ENCODE measurements at regions of chr7 and their contacts with region 1.

Region 1: DNA sequence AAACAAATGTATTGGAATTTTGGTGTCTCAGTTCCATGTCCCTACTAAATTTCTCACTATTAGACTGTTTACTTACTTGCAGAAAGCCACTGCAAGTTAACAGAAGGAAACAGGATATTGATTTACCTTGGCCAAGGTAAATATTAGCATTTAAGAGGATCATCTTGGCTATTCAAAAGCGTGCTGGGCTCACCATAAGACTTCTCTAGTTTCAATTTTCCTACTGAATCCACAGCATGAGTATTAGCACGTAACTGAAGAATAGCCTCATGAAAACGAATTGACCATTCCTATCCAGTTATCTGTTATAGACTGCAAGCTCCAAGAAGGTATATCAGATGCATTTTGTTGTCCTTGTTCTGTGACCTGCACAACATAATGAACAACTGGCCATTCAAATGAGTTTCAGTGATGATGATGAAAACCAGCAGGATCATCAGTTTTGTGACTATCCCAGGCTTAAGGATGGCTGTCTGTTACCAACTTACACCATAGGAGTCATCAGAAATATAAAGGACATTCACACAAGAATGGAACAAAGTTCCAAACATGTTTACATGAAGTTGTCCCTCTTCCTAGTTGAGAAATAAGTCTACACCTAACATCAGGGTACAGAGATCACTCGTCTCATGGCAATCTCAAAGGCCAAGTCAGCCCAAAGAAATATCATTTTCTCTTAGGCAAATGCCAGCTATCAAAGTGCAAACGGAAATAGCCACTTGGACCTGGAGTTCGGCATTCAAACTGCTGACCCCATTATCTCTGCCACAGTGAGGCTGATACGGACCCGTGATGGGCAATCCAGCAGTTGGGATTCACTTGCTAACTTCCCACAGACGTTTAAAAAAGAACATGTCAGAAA is 53.2 kb downstream of the CREB3L2 start:
- DNase-seq: peak; percentile 90
- ATAC-seq: peak; percentile 79
- H3K4me3 ChIP-seq: peak overlapping the region; percentile 11 to 47 (median 32); a peak in 4 of 6 replicates
- H3K27ac ChIP-seq: peak overlapping the region; percentile 88
- H3K4me1 ChIP-seq: peaks cover 96% of the 10 kb centered on the region
- H3K27me3 ChIP-seq: no peaks in the 10 kb centered on the region
- CTCF ChIP-seq: no peak
- EP300 ChIP-seq: peak in 1 of 2 experiments; percentile 95; a peak in 2 of 4 replicates
- POLR2A ChIP-seq: peak; percentile 33 to 35; a peak in 1 of 4 replicates
- RAD21 ChIP-seq: no peak

Region 2: DNA sequence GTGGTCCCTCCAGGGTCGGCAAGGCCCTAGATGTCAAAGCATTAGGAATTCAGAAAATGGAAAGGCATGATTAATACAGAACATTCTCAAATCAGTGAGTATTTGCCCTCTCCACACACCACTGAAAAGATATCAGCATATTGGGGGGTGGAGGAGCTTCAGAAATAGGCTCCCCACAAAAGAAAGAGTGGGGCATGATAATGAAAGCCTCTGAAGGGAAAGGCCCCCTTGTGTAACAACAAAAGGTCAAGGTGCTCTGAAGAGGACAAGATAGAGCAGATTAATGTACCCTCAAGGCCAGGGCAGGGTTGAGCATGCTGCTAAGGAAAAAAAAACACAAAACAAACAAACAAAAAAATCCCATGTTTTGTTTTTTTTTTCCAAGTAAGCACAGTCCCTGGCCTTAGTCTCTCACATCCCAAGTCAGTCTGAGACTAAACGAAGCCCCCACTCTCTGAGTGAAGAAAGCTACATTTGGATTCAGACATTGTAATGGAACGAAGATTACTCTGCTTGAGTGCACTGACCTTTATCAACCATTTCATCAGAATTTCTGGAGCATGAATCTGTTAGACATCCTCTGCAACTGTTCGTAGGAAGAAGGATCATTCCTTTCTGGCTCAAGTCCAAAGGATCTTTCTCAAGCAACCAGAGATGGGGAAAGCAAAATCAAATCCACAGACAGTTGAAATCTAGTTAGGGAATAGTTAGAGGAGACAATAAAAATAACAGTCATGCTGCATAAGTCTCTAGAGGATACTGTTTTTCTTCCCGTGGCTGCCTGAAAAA is 74.5 kb before region 1 on chr7:
- CTCF ChIA-PET with region 1: no interaction called
- POLR2A ChIA-PET with region 1: no interaction called
- in situ Hi-C with region 1: no loop called
- intact Hi-C with region 1: no loop called
- DNase-seq: no peak
- ATAC-seq: no peak
- H3K4me3 ChIP-seq: no peak overlapping the region
- H3K27ac ChIP-seq: no peak overlapping the region
- H3K4me1 ChIP-seq: no peaks in the 10 kb centered on the region
- H3K27me3 ChIP-seq: no peaks in the 10 kb centered on the region
- CTCF ChIP-seq: no peak
- EP300 ChIP-seq: no peak
- POLR2A ChIP-seq: no peak
- RAD21 ChIP-seq: no peak

Region 3: GRCh38 chr7:137992550-137993394 is 44.1 kb after region 1 on chr7:
- CTCF ChIA-PET with region 1: no interaction called
- POLR2A ChIA-PET with region 1: interaction called, 21 read pairs
- in situ Hi-C with region 1: no loop called
- intact Hi-C with region 1: no loop called
- DNase-seq: peak; percentile 78
- ATAC-seq: peak; percentile 76
- H3K4me3 ChIP-seq: peak overlapping the region; percentile 7 to 52 (median 30); a peak in 5 of 6 replicates
- H3K27ac ChIP-seq: peak overlapping the region; percentile 92
- H3K4me1 ChIP-seq: peaks cover 100% of the 10 kb centered on the region
- H3K27me3 ChIP-seq: no peaks in the 10 kb centered on the region
- CTCF ChIP-seq: no peak
- EP300 ChIP-seq: no peak; a peak in 1 of 4 replicates
- POLR2A ChIP-seq: no peak
- RAD21 ChIP-seq: no peak

Measured in HepG2 (cell line).